AG04450 (cell line): ENCODE measurements at regions of chr11 and their contacts with region 1.

Region 1: GRCh38 chr11:6682936-6683861 is at the start of gene MRPL17:
- DNase-seq: peak; percentile 98
- H3K4me3 ChIP-seq: peak within 1 kb of the TSS; percentile 100
- H3K27ac ChIP-seq: peak within 1 kb of the TSS; percentile 90
- H3K27me3 ChIP-seq: no peaks in the 10 kb centered on the region
- CTCF ChIP-seq: peak; percentile 85
- polyA plus RNA-seq, gene MRPL17: 63.3 and 69.1 TPM in 2 replicates

Region 2: DNA sequence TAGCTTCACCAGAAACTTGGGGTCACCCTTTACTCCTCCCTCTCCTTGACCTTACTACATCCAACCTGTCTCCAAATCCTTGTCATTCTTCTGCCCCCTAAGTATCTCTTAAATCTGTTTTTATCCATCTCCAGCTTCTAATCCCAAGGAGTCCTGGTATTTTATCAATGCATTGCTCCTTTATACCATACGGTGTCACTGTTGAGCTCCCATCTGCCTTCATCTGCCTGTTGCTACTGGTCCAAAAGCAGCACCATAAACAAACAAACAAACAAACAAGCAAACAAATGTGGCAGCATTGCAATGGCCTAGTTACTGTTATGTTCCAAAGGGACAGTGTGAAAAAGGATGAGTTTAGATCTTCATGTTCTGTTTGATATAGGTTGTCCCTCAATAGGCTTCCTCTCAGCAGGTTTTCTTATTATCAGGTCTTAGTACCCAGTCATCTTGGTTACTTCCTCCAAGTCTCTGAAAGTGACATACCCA is 151.9 kb before region 1 on chr11:
- CTCF ChIA-PET with region 1: interaction called, 56 read pairs
- POLR2A ChIA-PET with region 1: no interaction called
- DNase-seq: no peak
- H3K4me3 ChIP-seq: no peak overlapping the region
- H3K27ac ChIP-seq: no peak overlapping the region
- H3K27me3 ChIP-seq: no peaks in the 10 kb centered on the region
- CTCF ChIP-seq: peak; percentile 82

Region 3: GRCh38 chr11:6612213-6613041 is 70.8 kb before region 1 on chr11 and contains the start of gene TAF10:
- CTCF ChIA-PET with region 1: interaction called, 44 read pairs
- POLR2A ChIA-PET with region 1: interaction called, 13 read pairs
- DNase-seq: peak; percentile 88
- H3K4me3 ChIP-seq: peak within 1 kb of the TSS; percentile 74
- H3K27ac ChIP-seq: peak within 1 kb of the TSS; percentile 99
- H3K27me3 ChIP-seq: no peaks in the 10 kb centered on the region
- CTCF ChIP-seq: peak; percentile 57
- polyA plus RNA-seq, gene TAF10: 170 and 215 TPM in 2 replicates

Region 4: GRCh38 chr11:6650104-6650503 is 33.1 kb before region 1 on chr11:
- CTCF ChIA-PET with region 1: interaction called, 10 read pairs
- POLR2A ChIA-PET with region 1: no interaction called
- DNase-seq: no peak
- H3K4me3 ChIP-seq: no peak overlapping the region
- H3K27ac ChIP-seq: no peak overlapping the region
- H3K27me3 ChIP-seq: peaks cover 16% of the 10 kb centered on the region
- CTCF ChIP-seq: no peak

Region 5: GRCh38 chr11:6695377-6695776 is 12.2 kb after region 1 on chr11:
- CTCF ChIA-PET with region 1: interaction called, 19 read pairs
- POLR2A ChIA-PET with region 1: no interaction called
- DNase-seq: no peak
- H3K4me3 ChIP-seq: no peak overlapping the region
- H3K27ac ChIP-seq: no peak overlapping the region
- H3K27me3 ChIP-seq: no peaks in the 10 kb centered on the region
- CTCF ChIP-seq: no peak